ENCODE measurements at regions of chr3 and their contacts with region 1.

Region 1: DNA sequence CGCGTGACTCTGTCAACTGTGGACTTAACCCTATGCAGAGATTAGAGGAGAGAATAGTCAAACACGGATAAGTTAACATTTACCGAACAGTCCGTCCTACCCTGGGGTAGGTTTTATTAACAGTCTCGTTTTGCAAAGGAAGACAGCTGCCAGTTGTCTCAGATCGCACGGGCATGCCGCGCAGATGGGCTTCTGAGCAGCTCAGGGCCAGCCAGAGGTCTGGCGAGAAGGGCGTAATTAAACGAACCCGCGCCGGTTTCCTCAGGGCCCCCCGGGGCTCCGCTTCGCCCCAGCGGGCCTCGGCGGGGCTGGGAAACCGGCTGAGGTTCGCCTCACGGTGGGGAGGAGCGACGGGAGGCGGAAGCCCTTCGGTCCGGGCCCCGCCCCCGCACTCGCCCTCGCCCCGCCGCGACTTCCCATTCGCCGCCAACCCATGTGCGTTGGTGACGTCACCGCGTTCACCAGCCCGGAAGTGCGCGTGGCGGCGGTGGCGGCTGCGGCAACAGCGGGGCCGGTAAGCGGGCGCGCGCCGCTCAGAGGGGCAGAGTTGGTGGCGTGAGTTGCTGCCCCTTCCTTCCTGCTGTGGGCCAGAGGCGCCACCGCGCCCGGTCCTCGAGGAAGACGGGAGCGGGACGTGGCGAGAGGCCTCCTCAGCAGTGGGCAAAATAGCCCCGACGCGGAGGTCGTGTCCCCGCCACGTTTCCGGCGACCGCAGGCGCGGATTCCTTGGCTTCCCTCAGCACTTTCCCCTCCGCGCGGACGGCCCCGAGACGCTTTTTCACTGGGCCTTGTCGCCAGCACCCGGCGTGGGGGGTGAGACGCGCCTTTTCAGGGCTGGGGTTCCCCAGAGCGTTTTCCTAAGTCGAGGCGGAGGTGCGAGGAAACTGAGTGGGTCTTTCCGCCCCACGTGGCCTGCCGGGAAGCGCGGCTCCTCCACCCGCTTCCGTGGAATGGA is at the start of gene TRNT1:
- DNase-seq: peak; percentile 92 to 98 (median 96)
- ATAC-seq: peak; percentile 95
- H3K4me3 ChIP-seq: peak within 1 kb of the TSS; percentile 77 to 93
- H3K4me3 Mint-ChIP-seq: peak within 1 kb of the TSS; percentile 94
- H3K27ac ChIP-seq: peak within 1 kb of the TSS; percentile 97 to 98
- H3K27ac Mint-ChIP-seq: peak within 1 kb of the TSS; percentile 98
- H3K4me1 ChIP-seq: peaks cover 38% of the 10 kb centered on the region
- H3K4me1 Mint-ChIP-seq: peaks cover 41% of the 10 kb centered on the region
- H3K27me3 ChIP-seq: no peaks in the 10 kb centered on the region
- H3K27me3 Mint-ChIP-seq: no peaks in the 10 kb centered on the region
- CTCF ChIP-seq: no peak
- total RNA-seq, gene TRNT1: 26.0 to 26.5 TPM

Region 2: DNA sequence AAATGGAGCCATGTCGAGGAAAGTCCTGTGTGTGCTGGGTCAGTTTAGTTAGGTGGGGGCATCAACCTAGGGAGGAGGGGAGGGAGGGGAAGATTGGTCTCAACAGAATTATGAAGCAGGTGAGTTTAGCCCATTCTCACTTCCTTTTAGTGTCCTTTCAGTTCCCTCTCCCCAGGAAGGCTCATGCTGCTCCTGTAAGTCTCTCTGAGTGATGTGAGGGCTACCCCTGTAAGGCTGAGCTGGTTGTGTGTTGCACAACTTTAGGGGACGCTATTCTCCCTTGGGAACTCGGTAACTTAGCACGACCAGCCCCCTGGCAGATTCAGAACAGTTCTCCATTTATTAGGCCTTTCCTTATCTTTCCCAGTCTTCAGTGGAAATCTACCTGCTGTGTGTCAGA is 37.7 kb before region 1 on chr3:
- CTCF ChIA-PET with region 1: no interaction called
- POLR2A ChIA-PET with region 1: no interaction called
- intact Hi-C with region 1: no loop called
- DNase-seq: no peak
- ATAC-seq: no peak
- H3K4me3 ChIP-seq: no peak overlapping the region
- H3K4me3 Mint-ChIP-seq: no peak overlapping the region
- H3K27ac ChIP-seq: no peak overlapping the region
- H3K27ac Mint-ChIP-seq: no peak overlapping the region
- H3K4me1 ChIP-seq: no peaks in the 10 kb centered on the region
- H3K4me1 Mint-ChIP-seq: no peaks in the 10 kb centered on the region
- H3K27me3 ChIP-seq: no peaks in the 10 kb centered on the region
- H3K27me3 Mint-ChIP-seq: no peaks in the 10 kb centered on the region
- CTCF ChIP-seq: no peak

Region 3: GRCh38 chr3:3107858-3108257 is 18.9 kb before region 1 on chr3:
- CTCF ChIA-PET with region 1: no interaction called
- POLR2A ChIA-PET with region 1: no interaction called
- intact Hi-C with region 1: no loop called
- DNase-seq: no peak
- ATAC-seq: no peak
- H3K4me3 ChIP-seq: no peak overlapping the region
- H3K4me3 Mint-ChIP-seq: no peak overlapping the region
- H3K27ac ChIP-seq: no peak overlapping the region
- H3K27ac Mint-ChIP-seq: no peak overlapping the region
- H3K4me1 ChIP-seq: no peaks in the 10 kb centered on the region
- H3K4me1 Mint-ChIP-seq: peaks cover 5% of the 10 kb centered on the region
- H3K27me3 ChIP-seq: no peaks in the 10 kb centered on the region
- H3K27me3 Mint-ChIP-seq: peaks cover 6% of the 10 kb centered on the region
- CTCF ChIP-seq: no peak

Region 4: GRCh38 chr3:3145831-3146230 is 19.1 kb after region 1 on chr3:
- CTCF ChIA-PET with region 1: no interaction called
- POLR2A ChIA-PET with region 1: interaction called, 4 read pairs
- intact Hi-C with region 1: loop called in 1 of 2 experiments (anchors 2 kb)
- DNase-seq: no peak
- ATAC-seq: no peak
- H3K4me3 ChIP-seq: no peak overlapping the region
- H3K4me3 Mint-ChIP-seq: no peak overlapping the region
- H3K27ac ChIP-seq: no peak overlapping the region
- H3K27ac Mint-ChIP-seq: peak overlapping the region; percentile 47
- H3K4me1 ChIP-seq: no peaks in the 10 kb centered on the region
- H3K4me1 Mint-ChIP-seq: peaks cover 28% of the 10 kb centered on the region
- H3K27me3 ChIP-seq: no peaks in the 10 kb centered on the region
- H3K27me3 Mint-ChIP-seq: no peaks in the 10 kb centered on the region
- CTCF ChIP-seq: no peak

Region 5: DNA sequence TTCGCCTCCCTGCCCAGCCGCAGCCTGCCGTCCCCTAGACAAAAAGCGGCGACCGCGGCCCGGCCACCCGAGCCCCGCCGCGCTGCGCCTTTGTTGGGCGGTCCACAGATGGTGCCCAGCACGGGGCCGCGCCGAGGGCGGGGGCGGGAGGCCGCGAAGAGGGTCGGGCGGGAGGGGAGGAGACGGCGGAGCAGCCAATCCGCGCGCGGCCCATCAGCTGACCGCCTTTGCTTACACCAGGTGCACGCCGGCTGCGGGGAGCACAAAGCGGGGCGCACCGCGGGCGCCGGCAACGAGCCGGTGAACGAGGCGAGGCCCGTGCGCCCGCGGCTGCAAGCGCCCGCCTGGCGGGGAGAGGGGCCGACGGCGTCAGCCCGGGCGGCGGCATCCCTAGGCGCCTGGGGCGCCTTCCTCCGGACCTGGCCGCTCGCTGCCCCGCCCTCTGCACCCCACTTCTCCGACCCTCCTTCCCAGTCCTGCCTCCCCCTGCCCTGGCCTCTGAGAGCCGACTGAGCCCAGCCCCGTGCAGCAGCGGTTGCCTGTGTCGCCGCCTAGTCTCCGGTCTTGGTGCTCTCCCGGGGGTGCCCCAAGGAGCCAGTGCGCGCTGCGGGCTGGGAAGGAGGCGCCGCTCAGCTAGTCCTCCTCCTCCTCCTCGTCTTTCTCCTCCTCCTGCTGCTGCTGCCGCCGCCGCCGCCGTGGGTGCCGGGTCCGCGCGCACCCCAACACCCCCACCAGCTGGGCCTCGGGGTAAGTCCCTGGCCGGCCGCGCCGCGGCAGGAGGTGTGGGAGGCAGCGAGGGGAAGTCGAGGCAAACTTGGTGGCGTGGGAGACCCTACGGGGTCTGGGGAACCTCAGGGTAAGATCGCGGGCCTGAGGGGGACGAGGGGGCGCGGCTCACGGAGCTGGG is 672.7 kb after region 1 on chr3 and contains the start of gene LRRN1:
- CTCF ChIA-PET with region 1: no interaction called
- POLR2A ChIA-PET with region 1: interaction called, 3 read pairs
- intact Hi-C with region 1: loop called in 1 of 2 experiments (anchors 5 kb)
- DNase-seq: peak; percentile 12 to 80 (median 57)
- ATAC-seq: peak; percentile 65
- H3K4me3 ChIP-seq: peak within 1 kb of the TSS; percentile 52 to 81
- H3K4me3 Mint-ChIP-seq: peak within 1 kb of the TSS; percentile 94
- H3K27ac ChIP-seq: peak within 1 kb of the TSS; percentile 62 to 76
- H3K27ac Mint-ChIP-seq: peak within 1 kb of the TSS; percentile 94
- H3K4me1 ChIP-seq: peaks cover 5% of the 10 kb centered on the region
- H3K4me1 Mint-ChIP-seq: peaks cover 25% of the 10 kb centered on the region
- H3K27me3 ChIP-seq: peaks cover 0 to 4% of the 10 kb centered on the region in 2 experiments
- H3K27me3 Mint-ChIP-seq: peaks cover 4% of the 10 kb centered on the region
- CTCF ChIP-seq: no peak
- total RNA-seq, gene LRRN1: 1.0 to 1.2 TPM

Region 6: GRCh38 chr3:4284865-4285264 is 1158.1 kb after region 1 on chr3:
- CTCF ChIA-PET with region 1: no interaction called
- POLR2A ChIA-PET with region 1: no interaction called
- intact Hi-C with region 1: no loop called
- DNase-seq: no peak
- ATAC-seq: no peak
- H3K4me3 ChIP-seq: no peak overlapping the region
- H3K4me3 Mint-ChIP-seq: no peak overlapping the region
- H3K27ac ChIP-seq: no peak overlapping the region
- H3K27ac Mint-ChIP-seq: no peak overlapping the region
- H3K4me1 ChIP-seq: no peaks in the 10 kb centered on the region
- H3K4me1 Mint-ChIP-seq: no peaks in the 10 kb centered on the region
- H3K27me3 ChIP-seq: no peaks in the 10 kb centered on the region
- H3K27me3 Mint-ChIP-seq: no peaks in the 10 kb centered on the region
- CTCF ChIP-seq: no peak

Region 7: DNA sequence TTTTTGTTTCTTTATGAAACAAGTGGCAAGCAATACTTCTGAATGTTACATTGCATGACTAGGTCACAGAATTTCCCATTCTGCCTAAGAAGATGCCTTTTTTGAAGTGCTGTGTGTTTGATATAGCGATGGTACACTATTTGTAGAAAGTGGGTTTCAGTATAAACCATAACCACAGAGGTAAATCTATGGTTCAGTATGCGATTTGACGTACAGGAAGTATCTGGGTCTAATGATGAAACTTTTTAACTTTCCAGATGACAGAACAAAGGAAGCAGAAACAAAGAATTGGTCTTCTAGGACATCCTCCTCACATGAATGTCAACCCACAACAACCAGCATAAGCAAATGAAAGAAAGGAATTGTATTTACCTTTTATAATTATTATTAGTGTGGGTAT is 1719.1 kb after region 1 on chr3:
- CTCF ChIA-PET with region 1: no interaction called
- POLR2A ChIA-PET with region 1: no interaction called
- intact Hi-C with region 1: loop called in 1 of 2 experiments (anchors 10 kb)
- DNase-seq: peak in 2 of 9 experiments; percentile 74 to 87
- ATAC-seq: peak; percentile 77
- H3K4me3 ChIP-seq: no peak overlapping the region
- H3K4me3 Mint-ChIP-seq: peak overlapping the region; percentile 38
- H3K27ac ChIP-seq: no peak overlapping the region
- H3K27ac Mint-ChIP-seq: peak overlapping the region; percentile 79
- H3K4me1 ChIP-seq: peaks cover 94% of the 10 kb centered on the region
- H3K4me1 Mint-ChIP-seq: peaks cover 87% of the 10 kb centered on the region
- H3K27me3 ChIP-seq: no peaks in the 10 kb centered on the region
- H3K27me3 Mint-ChIP-seq: no peaks in the 10 kb centered on the region
- CTCF ChIP-seq: no peak

Region 8: GRCh38 chr3:5122030-5122740 is 1995.4 kb after region 1 on chr3 and contains the start of gene ARL8B:
- CTCF ChIA-PET with region 1: no interaction called
- POLR2A ChIA-PET with region 1: no interaction called
- intact Hi-C with region 1: loop called in 1 of 2 experiments (anchors 10 kb)
- DNase-seq: peak; percentile 80 to 95 (median 91)
- ATAC-seq: peak; percentile 98
- H3K4me3 ChIP-seq: peak within 1 kb of the TSS; percentile 91 to 98
- H3K4me3 Mint-ChIP-seq: peak within 1 kb of the TSS; percentile 81
- H3K27ac ChIP-seq: peak within 1 kb of the TSS; percentile 87 to 92
- H3K27ac Mint-ChIP-seq: peak within 1 kb of the TSS; percentile 81
- H3K4me1 ChIP-seq: peaks cover 31% of the 10 kb centered on the region
- H3K4me1 Mint-ChIP-seq: peaks cover 38% of the 10 kb centered on the region
- H3K27me3 ChIP-seq: no peaks in the 10 kb centered on the region
- H3K27me3 Mint-ChIP-seq: no peaks in the 10 kb centered on the region
- CTCF ChIP-seq: peak; percentile 92
- total RNA-seq, gene ARL8B: 54.1 to 61.7 TPM